Activated T-helper 1 cell treated with anti-CD3 and anti-CD28 coated beads, Interleukin-12 subunit alpha, Interleukin-12 subunit beta, Interleukin-2, Interleukin-4 antibody, amounts not matched to agents 30 ng/mL and 10 ng/mL and 1 ng/mL, durations not matched to agents 14 hours and 24 hours and 36 hours (primary cell): ENCODE measurements at regions of chr12 and their contacts with region 1.

Region 1: DNA sequence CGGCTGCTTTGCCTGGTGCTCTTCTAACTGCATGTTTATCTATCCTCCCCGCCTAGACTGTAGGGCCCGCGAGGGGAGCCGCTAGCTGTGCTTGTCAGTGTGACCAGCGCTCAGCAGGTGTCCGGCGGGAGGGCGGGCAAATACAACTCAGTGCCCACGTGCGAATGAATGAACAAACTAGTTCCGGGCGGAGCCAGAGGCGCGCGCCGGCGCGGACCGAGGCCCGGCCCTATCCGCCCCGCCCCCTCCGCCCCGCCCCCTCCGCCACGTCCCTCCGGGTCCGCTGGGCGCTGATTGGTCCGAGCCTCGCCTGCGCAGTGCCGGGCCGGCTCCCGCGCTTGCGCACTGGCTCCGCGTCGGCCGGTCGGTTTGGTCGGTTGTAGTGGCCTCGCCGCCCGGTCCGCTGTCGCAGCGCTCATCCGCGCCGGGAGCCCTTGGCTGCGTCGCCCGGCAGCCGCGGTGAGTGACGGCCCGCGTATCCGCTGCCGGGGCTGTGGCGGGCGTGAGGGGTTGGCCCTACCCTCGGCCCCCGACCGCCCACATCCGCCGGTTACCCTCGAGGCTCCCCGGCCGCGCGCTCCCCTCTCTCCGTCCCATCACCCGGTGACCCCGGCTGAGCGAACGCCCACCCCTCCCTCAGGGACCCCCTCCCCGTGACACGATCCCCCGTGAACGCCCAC is 60.0 kb downstream of the DDX51 start:
- DNase-seq: peak; percentile 87
- H3K4me3 Mint-ChIP-seq: peak overlapping the region; percentile 97
- H3K27ac Mint-ChIP-seq: peak overlapping the region; percentile 96
- H3K4me1 Mint-ChIP-seq: peaks cover 27% of the 10 kb centered on the region
- H3K27me3 Mint-ChIP-seq: no peaks in the 10 kb centered on the region

Region 2: GRCh38 chr12:131608740-131609690 is 475.1 kb before region 1 on chr12:
- intact Hi-C with region 1: loop called (anchors 10 kb)
- DNase-seq: peak; percentile 54
- H3K4me3 Mint-ChIP-seq: no peak overlapping the region
- H3K27ac Mint-ChIP-seq: peak overlapping the region; percentile 44
- H3K4me1 Mint-ChIP-seq: peaks cover 56% of the 10 kb centered on the region
- H3K27me3 Mint-ChIP-seq: peaks cover 4% of the 10 kb centered on the region

Region 3: GRCh38 chr12:131894313-131894860 is 189.7 kb before region 1 on chr12 and contains the start of gene ULK1:
- intact Hi-C with region 1: loop called (anchors 1 kb)
- DNase-seq: peak; percentile 91
- H3K4me3 Mint-ChIP-seq: peak within 1 kb of the TSS; percentile 86
- H3K27ac Mint-ChIP-seq: peak within 1 kb of the TSS; percentile 78
- H3K4me1 Mint-ChIP-seq: no peaks in the 10 kb centered on the region
- H3K27me3 Mint-ChIP-seq: peaks cover 5% of the 10 kb centered on the region
- total RNA-seq, gene ULK1: 28.4 TPM in 2 replicates

Region 4: GRCh38 chr12:131949431-131950181 is 134.5 kb before region 1 on chr12 and contains the start of gene EP400:
- intact Hi-C with region 1: loop called (anchors 1 kb)
- DNase-seq: peak; percentile 89
- H3K4me3 Mint-ChIP-seq: peak within 1 kb of the TSS; percentile 92
- H3K27ac Mint-ChIP-seq: peak within 1 kb of the TSS; percentile 90
- H3K4me1 Mint-ChIP-seq: peaks cover 30% of the 10 kb centered on the region
- H3K27me3 Mint-ChIP-seq: no peaks in the 10 kb centered on the region
- total RNA-seq, gene EP400: 66.6 TPM in 2 replicates

Region 5: DNA sequence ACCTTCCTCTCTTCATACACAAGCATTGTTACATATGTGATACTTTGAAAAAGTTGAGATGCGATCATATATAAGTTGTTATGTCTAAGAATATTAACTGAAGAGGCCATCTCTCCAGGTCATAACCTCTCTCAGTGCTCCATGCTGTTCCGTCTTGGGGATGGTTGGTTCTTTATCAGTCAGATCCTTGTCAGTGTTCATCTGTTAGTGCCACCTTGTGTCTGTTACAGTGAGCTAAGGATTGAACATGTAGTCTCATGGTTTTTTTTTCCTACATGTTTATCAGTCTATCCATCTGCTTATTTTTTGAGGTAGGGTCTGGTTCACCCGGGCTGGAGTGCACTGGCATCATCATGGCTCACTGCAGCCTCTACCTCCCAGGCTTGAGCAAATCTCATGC is 103.8 kb before region 1 on chr12:
- intact Hi-C with region 1: no loop called
- DNase-seq: no peak
- H3K4me3 Mint-ChIP-seq: no peak overlapping the region
- H3K27ac Mint-ChIP-seq: no peak overlapping the region
- H3K4me1 Mint-ChIP-seq: peaks cover 10% of the 10 kb centered on the region
- H3K27me3 Mint-ChIP-seq: no peaks in the 10 kb centered on the region

Region 6: DNA sequence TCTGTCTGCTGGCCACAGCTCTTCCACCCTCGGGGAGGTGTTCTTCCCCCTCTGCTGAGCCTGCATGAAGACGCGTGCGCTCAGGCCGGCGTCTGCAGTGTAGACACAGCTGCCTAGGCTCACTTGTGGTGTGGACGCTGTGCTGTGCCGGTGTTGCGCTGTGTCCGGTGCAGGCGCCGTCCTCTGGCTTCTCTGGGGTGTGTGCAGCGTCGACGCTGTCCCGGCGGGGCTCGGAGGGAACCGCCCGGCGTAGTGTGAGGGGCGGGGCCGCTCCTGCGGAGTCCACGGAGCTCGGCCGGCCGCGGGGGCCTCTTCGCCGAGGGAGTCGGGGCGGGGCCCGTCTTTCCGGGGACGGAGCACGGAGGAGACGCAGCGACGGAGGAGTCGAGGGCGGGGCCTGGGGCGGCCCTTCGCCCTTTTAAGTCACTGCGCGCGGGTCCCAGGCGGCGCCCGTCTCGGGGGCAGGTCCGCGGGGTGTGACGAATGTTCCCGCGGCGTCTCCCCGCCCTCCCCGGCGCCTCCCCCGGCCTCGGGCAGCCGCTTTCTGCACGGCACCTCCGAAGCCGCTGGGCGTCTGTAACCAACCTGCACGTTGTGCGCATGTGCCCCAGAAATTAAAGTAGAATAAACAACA is 105.4 kb after region 1 on chr12:
- intact Hi-C with region 1: loop called (anchors 1 kb)
- DNase-seq: peak; percentile 95
- H3K4me3 Mint-ChIP-seq: peak overlapping the region; percentile 93
- H3K27ac Mint-ChIP-seq: peak overlapping the region; percentile 87
- H3K4me1 Mint-ChIP-seq: peaks cover 31% of the 10 kb centered on the region
- H3K27me3 Mint-ChIP-seq: peaks cover 5% of the 10 kb centered on the region

Region 7: DNA sequence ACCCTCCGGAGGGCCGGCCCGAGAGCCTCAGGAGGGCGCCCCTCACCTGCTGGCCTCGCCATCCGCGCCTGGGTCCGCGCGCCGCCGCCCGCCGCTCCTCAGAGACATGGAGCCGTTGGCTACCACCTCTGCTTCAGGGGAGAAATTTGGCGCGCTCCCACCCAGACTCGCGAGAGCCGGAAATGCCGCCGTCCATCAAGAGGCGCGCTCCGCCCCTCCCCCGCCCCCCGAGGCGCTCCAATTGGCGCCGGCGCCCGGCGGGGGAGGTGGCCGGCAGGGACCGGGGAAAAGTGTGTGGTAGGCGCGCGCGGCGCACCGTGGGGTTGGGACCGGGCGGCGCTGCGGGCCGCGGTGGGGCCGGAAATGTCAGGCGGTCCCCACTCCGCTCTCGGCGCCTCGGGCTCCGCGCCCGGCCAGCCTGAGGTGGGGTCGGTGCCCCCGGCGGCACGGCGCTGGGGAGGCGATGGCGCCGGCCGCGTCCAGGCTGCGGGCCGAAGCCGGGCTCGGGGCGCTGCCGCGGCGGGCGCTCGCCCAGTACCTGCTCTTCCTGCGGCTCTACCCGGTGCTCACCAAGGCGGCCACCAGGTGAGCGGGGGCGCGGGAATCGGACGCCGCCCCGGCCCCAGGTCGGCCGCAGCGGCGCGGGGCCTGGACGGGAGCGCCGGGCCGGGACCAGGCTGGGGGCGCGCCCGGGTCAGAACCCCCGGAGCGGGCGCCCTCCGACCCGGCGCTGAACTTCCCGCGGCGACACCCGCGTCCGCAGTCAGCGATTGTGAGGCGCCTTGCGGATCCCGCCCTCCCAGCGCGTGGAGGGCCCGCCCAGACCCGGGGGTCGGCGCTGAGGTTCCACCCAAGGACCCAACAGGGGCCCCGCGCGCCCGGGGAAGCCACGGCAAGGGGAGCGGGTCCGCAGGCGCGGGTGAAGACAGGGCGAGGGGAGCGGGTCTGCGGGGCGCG is 603.4 kb after region 1 on chr12 and contains the starts of genes POLE and PXMP2:
- intact Hi-C with region 1: loop called (anchors 2 kb)
- DNase-seq: peak; percentile 91
- H3K4me3 Mint-ChIP-seq: peak within 1 kb of the TSS; percentile 84
- H3K27ac Mint-ChIP-seq: peak within 1 kb of the TSS; percentile 80
- H3K4me1 Mint-ChIP-seq: peaks cover 26% of the 10 kb centered on the region
- H3K27me3 Mint-ChIP-seq: no peaks in the 10 kb centered on the region
- total RNA-seq, gene POLE: 168 and 170 TPM in 2 replicates
- total RNA-seq, gene PXMP2: 21.5 and 23.3 TPM in 2 replicates